Uterus (tissue), 4 donors: ENCODE measurements at regions of chr2 and their contacts with region 1.

Region 1: DNA sequence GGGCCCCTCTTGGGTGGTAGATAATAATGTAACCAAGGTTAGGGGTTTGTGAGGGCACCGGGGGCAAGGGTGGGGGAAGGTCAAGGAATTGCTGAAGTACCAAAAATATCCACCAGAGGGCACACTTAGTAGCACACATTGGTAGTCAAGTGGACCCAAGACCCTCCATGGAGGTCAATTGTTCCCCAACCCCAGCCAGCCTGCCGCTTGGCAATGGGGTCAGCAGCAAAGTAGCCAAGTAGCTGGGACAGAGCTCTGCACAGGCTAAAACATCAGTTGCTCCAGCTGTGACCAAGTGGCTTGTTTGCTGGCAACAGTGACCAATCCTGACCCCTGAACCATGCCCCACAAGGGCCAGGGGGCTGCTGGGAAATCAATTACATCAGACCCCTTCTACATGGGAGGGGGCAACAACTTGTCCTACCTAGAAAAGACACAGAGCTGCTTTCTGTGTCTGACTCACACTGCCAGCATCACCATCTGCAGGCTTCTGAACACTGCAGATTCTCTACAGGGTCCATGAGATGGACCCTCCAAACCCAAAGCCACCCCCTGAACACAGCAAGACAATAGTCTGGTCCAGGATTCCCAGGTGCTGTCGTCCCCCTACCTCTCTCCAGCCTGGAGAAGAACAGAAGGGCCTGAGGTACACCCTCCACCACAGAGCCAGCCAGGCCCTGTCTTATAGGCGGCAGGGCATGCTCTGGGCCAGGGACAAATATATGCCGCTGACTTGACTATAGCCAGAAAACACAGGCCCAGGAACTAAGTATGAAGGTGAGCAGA is 76.0 kb downstream of the EMX1 start:
- DNase-seq: peak in 1 of 2 donors; percentile 18
- H3K4me3 ChIP-seq: no peak overlapping the region
- H3K27ac ChIP-seq: no peak overlapping the region
- H3K4me1 ChIP-seq: no peaks in the 10 kb centered on the region
- H3K27me3 ChIP-seq: no peaks in the 10 kb centered on the region
- CTCF ChIP-seq: peak; percentile 59 to 75 (median 68)
- POLR2A ChIP-seq: no peak

Region 2: DNA sequence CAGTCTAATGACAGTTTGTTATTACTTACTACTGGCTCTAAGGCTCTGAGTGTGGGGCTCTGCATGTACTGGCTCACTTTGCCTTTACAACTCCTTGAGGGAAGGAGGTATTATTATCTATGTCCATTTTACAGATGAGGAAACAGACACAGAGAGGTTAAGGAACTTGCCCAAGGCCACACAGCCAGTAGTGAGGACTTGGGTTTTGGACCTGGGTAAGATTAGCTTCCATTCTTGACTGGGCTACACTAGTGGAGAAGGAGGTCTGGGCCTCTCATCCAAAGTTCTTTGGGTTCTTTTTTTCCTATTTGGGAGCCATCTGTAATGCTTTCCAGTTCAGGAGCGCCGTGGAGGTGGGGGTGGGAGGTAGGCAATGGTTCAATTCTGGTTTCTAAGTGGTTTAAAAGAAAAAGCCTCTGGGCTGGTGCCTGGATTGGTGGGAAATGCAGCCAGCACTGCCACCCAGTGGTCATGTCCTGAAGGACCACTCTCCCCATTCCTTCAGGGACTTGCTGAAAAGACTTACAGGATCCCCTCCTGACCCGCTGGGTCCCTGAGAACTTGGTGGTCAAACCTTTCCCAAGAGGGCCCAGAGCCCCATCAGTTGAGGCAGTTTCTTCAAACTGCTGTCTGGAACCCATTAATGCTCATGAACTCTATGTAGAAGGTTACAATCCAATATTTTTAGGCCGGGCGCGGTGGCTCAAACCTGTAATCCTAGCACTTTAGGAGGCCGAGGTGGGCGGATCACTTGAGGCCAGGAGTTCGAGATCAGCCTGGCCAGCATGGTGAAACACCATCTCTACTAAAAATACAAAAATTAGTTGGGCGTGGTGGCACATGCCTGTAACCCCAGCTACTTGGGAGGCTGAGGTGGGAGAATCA is 170.4 kb after region 1 on chr2:
- intact Hi-C with region 1: loop called (anchors 5 kb)
- DNase-seq: peak; percentile 58 to 71
- H3K4me3 ChIP-seq: no peak overlapping the region
- H3K27ac ChIP-seq: no peak overlapping the region
- H3K4me1 ChIP-seq: no peaks in the 10 kb centered on the region
- H3K27me3 ChIP-seq: no peaks in the 10 kb centered on the region
- CTCF ChIP-seq: peak; percentile 72 to 83 (median 78)
- POLR2A ChIP-seq: no peak

Region 3: DNA sequence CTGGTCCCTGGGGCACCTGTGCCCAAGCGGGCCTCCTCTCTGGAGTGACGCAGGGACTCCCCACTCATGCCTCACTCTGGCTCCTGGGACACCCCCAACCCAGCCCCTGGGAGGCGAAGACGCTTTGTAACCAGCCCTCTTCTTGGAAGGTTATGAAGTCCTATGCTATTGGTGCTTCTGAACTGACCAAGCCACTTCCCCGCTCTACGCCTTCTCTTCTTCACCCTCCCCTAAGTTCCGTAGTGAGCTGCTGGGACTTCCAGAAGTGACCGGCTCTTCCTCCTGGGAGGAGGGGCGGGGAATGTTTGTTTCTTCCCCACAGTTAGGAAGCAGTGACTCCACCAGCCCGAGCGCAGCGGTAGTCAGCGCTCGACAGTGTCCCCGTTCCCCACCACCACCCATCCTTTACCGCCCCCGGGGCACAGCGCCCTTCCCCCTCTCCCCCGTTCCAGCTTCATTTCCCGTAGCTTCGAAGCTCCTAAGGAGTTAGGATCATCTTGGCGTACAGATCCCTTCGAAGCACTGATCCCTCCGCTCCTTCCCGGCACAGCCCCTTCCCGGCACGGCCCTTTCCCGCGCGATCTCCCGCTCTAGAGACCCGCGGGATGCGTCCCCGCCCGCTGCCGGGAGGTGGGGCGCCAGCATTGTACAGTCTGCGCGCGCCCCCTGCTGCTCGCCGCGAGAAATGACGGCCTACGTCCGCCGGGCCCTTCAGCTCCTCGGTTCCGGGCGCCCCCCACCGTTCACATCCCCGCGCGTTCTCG is 183.7 kb after region 1 on chr2:
- intact Hi-C with region 1: loop called (anchors 5 kb)
- DNase-seq: peak; percentile 89 to 91
- H3K4me3 ChIP-seq: peak overlapping the region; percentile 42 to 47
- H3K27ac ChIP-seq: peak overlapping the region; percentile 62 to 72
- H3K4me1 ChIP-seq: peaks cover 0 to 11% of the 10 kb centered on the region in 2 donors
- H3K27me3 ChIP-seq: peaks cover 0 to 12% of the 10 kb centered on the region in 2 donors
- CTCF ChIP-seq: peak; percentile 99
- POLR2A ChIP-seq: peak; percentile 19 to 22